Naive thymus-derived CD4-positive, alpha-beta T cell (primary cell): ENCODE measurements at regions of chr3 and their contacts with region 1.

Region 1: DNA sequence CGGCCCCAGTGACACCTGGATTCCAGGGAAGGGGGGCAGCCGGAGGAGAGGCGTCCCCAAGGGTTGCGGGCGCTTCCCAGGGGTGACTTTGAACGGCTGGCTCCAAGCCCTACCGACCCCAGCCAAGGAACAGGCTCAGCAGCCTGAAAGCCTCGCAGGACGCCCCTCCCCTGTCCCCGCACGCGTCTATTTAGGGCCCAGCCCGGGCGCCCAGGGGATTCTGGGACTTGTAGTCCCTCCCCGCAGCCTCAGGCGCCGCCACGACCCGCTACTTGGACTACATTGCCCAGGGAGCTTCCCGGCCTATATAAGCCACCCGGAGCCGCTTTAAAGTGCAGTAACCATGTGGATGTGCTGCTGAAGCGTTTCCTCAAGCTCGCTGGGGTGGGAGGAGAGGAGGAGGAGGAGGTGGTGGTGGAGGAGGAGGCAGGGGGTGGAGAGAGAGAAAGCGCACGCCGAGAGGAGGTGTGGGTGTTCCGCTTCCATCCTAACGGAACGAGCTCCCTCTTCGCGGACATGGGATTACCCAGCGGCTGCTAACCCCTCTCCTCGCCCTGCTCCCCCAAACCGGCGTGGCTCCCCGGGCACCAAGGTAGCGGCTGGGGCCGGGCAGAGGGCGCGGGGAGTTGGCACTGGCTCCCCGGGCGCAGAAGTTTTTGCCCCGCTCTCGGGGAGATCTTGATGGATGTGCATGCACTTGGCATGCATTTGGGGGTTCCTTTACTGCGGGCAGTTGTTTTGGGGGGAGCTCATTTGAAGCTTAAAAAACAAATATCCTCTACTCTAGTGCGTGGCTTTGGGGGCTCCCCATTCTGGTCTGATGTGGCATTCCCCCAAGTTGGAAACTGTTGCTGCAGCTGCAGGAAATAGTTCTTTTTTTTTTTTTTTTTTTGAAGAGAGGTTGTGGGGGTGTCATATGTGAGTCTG is at the start of gene ITPR1:
- DNase-seq: peak; percentile 91 to 99 (median 98)
- ATAC-seq: peak; percentile 95
- H3K4me3 ChIP-seq: peak within 1 kb of the TSS; percentile 84
- H3K4me3 Mint-ChIP-seq: peak within 1 kb of the TSS; percentile 93 to 98 (median 96)
- H3K27ac ChIP-seq: peak within 1 kb of the TSS; percentile 89
- H3K27ac Mint-ChIP-seq: peak within 1 kb of the TSS; percentile 86 to 96 (median 90)
- H3K4me1 ChIP-seq: peaks cover 14 to 17% of the 10 kb centered on the region in 2 donors
- H3K4me1 Mint-ChIP-seq: peaks cover 36 to 57% (median 41%) of the 10 kb centered on the region in 7 donors
- H3K27me3 ChIP-seq: no peaks in the 10 kb centered on the region
- H3K27me3 Mint-ChIP-seq: peaks cover 0 to 40% (median 0%) of the 10 kb centered on the region in 5 donors
- total RNA-seq, gene ITPR1: 66.7 to 118 (median 90.7) TPM

Region 2: DNA sequence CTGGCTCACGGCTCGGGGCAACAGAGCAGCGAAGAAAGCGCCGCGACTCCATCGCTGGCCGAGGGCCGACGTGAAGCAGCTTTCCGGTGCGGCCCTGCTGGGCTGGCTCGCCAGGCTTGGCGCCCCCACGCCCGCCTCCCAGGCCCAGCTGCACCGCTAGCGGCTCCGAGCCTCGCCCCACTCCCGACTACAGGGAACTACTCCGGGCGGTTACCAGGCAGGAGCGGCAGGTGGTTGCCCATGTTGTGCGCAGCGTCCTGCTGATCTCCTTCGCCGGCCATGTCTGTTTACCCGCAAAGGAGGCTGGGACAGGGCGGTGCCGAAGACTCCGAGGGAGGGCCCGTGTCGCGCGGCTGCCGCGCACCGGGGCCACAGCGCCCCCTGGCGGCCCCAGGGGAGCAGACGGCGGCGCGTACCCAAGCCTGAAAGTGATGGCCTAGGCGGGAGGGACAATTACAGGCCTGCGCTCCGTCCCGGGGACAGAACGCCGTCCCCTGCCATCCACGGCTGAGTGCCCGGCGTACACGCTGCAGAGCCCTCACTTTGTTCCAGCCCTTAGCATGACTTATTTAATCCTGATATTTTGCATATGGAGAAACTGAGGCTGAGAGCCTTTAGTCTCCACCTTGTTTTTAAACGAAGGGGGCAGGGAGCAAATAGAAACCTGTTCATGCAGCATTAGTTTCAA is 1313.7 kb before region 1 on chr3 and contains the start of gene CRBN:
- CTCF ChIA-PET with region 1: no interaction called
- POLR2A ChIA-PET with region 1: interaction called, 3 read pairs
- intact Hi-C with region 1: loop called (anchors 1 to 5 kb)
- DNase-seq: peak; percentile 82 to 91 (median 89)
- ATAC-seq: peak; percentile 100
- H3K4me3 ChIP-seq: peak within 1 kb of the TSS; percentile 86
- H3K4me3 Mint-ChIP-seq: peak within 1 kb of the TSS; percentile 88 to 99 (median 94)
- H3K27ac ChIP-seq: peak within 1 kb of the TSS; percentile 87
- H3K27ac Mint-ChIP-seq: peak within 1 kb of the TSS; percentile 89 to 98 (median 95)
- H3K4me1 ChIP-seq: peaks cover 24 to 36% of the 10 kb centered on the region in 2 donors
- H3K4me1 Mint-ChIP-seq: peaks cover 28 to 56% (median 46%) of the 10 kb centered on the region in 7 donors
- H3K27me3 ChIP-seq: no peaks in the 10 kb centered on the region
- H3K27me3 Mint-ChIP-seq: peaks cover 0 to 15% (median 0%) of the 10 kb centered on the region in 5 donors
- total RNA-seq, gene CRBN: 69.1 to 169 (median 134) TPM

Region 3: DNA sequence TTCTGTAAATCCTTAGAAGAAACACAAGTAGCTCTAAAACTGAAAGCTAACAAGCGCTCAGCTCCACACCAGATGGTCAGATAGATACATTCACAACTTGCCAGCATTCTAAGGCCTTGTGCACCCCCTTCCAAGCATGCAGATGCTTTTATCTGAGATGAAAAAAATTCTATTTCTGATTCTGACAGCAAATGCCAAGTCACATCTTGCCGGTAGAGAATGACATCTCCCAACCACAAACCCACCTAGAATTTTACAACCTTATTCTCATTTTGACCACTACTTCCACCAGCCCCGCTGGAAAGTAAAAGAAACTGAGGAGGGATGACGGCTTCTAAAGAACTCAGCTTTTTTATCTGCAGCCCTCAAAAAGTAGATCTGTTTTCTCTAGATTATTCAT is 83.9 kb before region 1 on chr3:
- CTCF ChIA-PET with region 1: no interaction called
- POLR2A ChIA-PET with region 1: no interaction called
- intact Hi-C with region 1: loop called in 1 of 2 experiments (anchors 2 kb)
- DNase-seq: peak in 1 of 9 donors; percentile 26
- ATAC-seq: no peak
- H3K4me3 ChIP-seq: no peak overlapping the region
- H3K4me3 Mint-ChIP-seq: peak overlapping the region in 1 of 10 donors; percentile 65
- H3K27ac ChIP-seq: no peak overlapping the region
- H3K27ac Mint-ChIP-seq: peak overlapping the region in 2 of 9 donors; percentile 29 to 80
- H3K4me1 ChIP-seq: no peaks in the 10 kb centered on the region
- H3K4me1 Mint-ChIP-seq: peaks cover 0 to 33% (median 5%) of the 10 kb centered on the region in 7 donors
- H3K27me3 ChIP-seq: no peaks in the 10 kb centered on the region
- H3K27me3 Mint-ChIP-seq: no peaks in the 10 kb centered on the region

Region 4: DNA sequence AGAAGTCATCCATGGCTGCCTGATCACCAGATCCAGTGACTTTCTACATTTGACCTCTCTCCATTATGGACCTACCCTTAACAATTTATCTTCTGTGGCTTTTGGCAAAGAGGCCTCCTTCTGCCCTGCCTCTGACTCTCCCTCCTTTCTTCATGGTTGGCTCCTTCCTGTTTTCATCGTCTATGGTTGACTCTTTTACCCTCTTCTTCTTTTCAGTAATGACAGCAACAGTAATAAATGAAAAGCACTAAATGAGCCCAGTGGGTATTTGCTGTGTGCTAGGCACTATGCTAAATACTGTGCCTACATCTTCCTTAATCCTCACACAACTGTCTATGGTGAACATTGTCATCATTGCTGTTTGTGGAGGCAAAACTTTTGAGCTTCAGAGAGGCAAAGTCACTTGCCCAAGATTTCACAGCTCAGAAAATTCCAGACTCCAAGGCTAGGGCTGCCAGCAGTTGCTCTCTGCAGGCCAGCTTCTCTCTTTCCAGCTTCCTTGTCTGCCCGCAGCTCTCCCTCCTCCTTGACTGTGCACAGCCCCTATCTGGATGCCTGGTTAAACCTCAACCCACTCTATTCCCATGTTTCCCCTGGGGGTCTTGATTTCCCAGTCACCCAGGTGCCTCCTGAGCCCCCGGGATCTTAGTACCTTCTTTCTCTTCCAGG is 24.5 kb after region 1 on chr3:
- CTCF ChIA-PET with region 1: interaction called, 31 read pairs
- POLR2A ChIA-PET with region 1: interaction called, 97 read pairs
- intact Hi-C with region 1: loop called (anchors 1 kb)
- DNase-seq: no peak
- ATAC-seq: no peak
- H3K4me3 ChIP-seq: no peak overlapping the region
- H3K4me3 Mint-ChIP-seq: peak overlapping the region; percentile 2 to 79 (median 50)
- H3K27ac ChIP-seq: peak overlapping the region; percentile 40
- H3K27ac Mint-ChIP-seq: peak overlapping the region; percentile 24 to 95 (median 79)
- H3K4me1 ChIP-seq: peaks cover 14 to 24% of the 10 kb centered on the region in 2 donors
- H3K4me1 Mint-ChIP-seq: peaks cover 31 to 62% (median 50%) of the 10 kb centered on the region in 7 donors
- H3K27me3 ChIP-seq: no peaks in the 10 kb centered on the region
- H3K27me3 Mint-ChIP-seq: no peaks in the 10 kb centered on the region

Region 5: GRCh38 chr3:4633078-4634004 is 140.1 kb after region 1 on chr3:
- CTCF ChIA-PET with region 1: interaction called, 5 read pairs
- POLR2A ChIA-PET with region 1: interaction called, 3 read pairs
- intact Hi-C with region 1: loop called (anchors 1 to 2 kb)
- DNase-seq: peak in 6 of 9 donors; percentile 24 to 57 (median 44)
- ATAC-seq: peak; percentile 80
- H3K4me3 ChIP-seq: no peak overlapping the region
- H3K4me3 Mint-ChIP-seq: no peak overlapping the region
- H3K27ac ChIP-seq: no peak overlapping the region
- H3K27ac Mint-ChIP-seq: peak overlapping the region in 5 of 9 donors; percentile 1 to 53 (median 43)
- H3K4me1 ChIP-seq: no peaks in the 10 kb centered on the region
- H3K4me1 Mint-ChIP-seq: peaks cover 6 to 9% (median 7%) of the 10 kb centered on the region in 7 donors
- H3K27me3 ChIP-seq: no peaks in the 10 kb centered on the region
- H3K27me3 Mint-ChIP-seq: no peaks in the 10 kb centered on the region

Region 6: DNA sequence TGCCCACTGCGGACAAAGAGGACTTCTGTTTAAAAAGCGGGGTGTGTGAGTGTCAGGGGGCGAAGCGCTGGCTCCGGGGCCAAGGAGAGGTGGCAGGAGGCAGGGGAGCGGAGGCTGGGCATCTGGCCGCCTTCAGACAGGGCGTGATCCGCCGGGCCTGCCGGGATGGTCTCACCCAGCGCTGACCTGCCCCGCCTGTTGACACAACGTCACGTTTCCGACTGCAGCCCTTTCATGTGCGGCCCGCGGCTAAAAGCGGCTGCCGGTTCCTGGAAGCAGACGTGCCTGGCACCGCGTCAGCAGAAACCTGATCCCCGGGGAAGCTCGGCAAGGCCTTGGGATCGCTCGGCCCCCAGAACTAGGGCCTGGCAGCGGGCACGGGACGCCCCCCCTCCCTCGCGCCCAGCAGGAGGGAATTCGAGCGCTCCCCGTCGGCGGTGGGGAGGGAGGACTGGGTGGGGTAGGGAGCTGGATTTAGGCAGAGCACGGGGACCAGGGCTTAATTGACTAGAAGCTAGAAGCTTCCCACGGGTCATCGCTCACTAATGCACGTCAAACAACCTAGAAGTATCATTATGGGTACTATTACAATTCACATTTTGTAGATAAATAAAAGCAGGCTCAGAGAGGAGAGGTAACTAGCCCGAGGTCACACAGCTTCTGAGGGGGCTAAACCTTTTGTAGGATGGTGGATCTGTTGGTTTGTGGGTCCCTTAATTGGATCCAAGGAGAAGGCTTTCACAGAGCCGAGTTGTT is 493.7 kb after region 1 on chr3:
- CTCF ChIA-PET with region 1: no interaction called
- POLR2A ChIA-PET with region 1: no interaction called
- intact Hi-C with region 1: loop called in 1 of 2 experiments (anchors 10 kb)
- DNase-seq: peak; percentile 15 to 74 (median 47)
- ATAC-seq: peak; percentile 79
- H3K4me3 ChIP-seq: peak overlapping the region; percentile 45
- H3K4me3 Mint-ChIP-seq: peak overlapping the region; percentile 74 to 90 (median 84)
- H3K27ac ChIP-seq: peak overlapping the region; percentile 44
- H3K27ac Mint-ChIP-seq: peak overlapping the region; percentile 33 to 90 (median 78)
- H3K4me1 ChIP-seq: peaks cover 26 to 47% of the 10 kb centered on the region in 2 donors
- H3K4me1 Mint-ChIP-seq: peaks cover 16 to 59% (median 35%) of the 10 kb centered on the region in 7 donors
- H3K27me3 ChIP-seq: no peaks in the 10 kb centered on the region
- H3K27me3 Mint-ChIP-seq: no peaks in the 10 kb centered on the region

Region 7: GRCh38 chr3:5187156-5187919 is 694.1 kb after region 1 on chr3 and contains the start of gene EDEM1:
- CTCF ChIA-PET with region 1: no interaction called
- POLR2A ChIA-PET with region 1: interaction called, 7 read pairs
- intact Hi-C with region 1: loop called (anchors 1 kb)
- DNase-seq: peak; percentile 81 to 100 (median 88)
- ATAC-seq: peak; percentile 95
- H3K4me3 ChIP-seq: peak within 1 kb of the TSS; percentile 89
- H3K4me3 Mint-ChIP-seq: peak within 1 kb of the TSS; percentile 90 to 100 (median 98)
- H3K27ac ChIP-seq: peak within 1 kb of the TSS; percentile 97
- H3K27ac Mint-ChIP-seq: peak within 1 kb of the TSS; percentile 95 to 100 (median 98)
- H3K4me1 ChIP-seq: peaks cover 13 to 21% of the 10 kb centered on the region in 2 donors
- H3K4me1 Mint-ChIP-seq: peaks cover 14 to 41% (median 32%) of the 10 kb centered on the region in 7 donors
- H3K27me3 ChIP-seq: no peaks in the 10 kb centered on the region
- H3K27me3 Mint-ChIP-seq: no peaks in the 10 kb centered on the region
- total RNA-seq, gene EDEM1: 97.3 to 138 (median 126) TPM